Endothelial cell of umbilical vein (primary cell): ENCODE measurements at regions of chr5 and their contacts with region 1.

Region 1: DNA sequence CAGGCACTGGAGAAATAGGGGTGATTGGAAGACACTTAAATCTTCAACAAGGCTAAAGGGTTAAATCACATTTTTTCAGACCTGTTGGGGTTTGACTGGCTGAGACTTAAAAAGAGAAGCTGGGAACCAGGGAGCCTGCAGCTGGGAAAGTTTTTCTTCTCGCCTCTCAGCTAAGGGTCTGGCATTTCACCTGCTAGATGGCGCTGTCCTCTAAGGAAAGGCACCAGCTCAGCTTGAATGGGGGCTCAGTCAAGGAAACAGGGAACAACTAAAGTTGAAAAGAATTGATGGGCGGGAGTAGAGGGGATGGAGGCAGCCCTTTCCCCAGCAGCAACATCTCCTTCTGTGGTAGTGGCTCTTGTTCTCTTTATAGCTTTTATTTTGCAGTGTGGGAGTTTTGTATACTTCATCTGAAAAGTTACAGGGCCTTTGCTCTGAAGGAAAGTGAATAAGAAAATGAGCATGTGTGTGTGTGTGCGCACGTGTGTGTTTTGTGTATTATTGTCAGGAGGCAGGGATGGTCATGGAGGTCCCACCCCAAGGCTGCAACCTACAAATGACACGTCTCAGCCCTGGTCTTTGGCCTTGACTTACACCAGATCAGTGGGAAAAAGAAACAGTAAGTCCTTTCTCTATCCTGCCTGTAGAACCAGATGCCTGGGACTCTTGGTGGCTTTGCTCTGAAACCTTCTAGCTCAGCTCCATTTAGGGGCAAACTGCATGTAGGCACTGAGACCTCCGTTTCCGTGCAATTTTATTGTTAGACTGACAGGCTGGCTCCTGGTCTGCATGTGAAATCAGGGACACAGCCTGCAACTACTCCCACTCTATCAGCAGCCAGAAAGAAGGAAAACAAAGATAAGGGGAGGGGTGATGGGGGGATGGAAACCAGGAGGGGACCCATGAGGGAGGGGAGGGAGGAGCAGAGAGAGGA is 316.2 kb upstream of the CLINT1 start:
- DNase-seq: peak; percentile 72
- H3K4me3 ChIP-seq: no peak overlapping the region
- H3K27ac ChIP-seq: no peak overlapping the region
- H3K4me1 ChIP-seq: no peaks in the 10 kb centered on the region
- H3K27me3 ChIP-seq: peaks cover 0 to 2% of the 10 kb centered on the region in 2 experiments
- CTCF ChIP-seq: peak; percentile 69 to 80
- POLR2A ChIP-seq: no peak

Region 2: DNA sequence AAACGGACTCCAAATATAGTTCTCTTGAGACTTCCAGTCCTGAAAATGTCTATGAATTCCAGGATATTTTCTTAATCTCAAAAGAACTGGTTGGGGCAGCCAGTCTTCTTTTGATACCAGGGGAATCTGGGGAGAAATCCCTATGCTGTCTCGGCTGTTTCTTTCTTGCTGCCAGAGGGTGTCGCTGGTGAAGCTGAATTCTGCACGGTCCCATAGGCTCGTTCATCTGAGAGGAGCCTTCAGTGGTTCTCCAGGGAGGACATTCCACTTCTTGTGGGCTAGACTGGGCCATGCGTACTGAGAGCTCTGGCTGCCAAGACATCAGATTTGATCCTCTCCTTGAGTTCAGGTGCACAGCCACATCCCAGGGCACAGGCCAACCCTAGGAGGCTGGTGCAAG is 161.2 kb before region 1 on chr5:
- CTCF ChIA-PET with region 1: interaction called, 14 read pairs
- POLR2A ChIA-PET with region 1: no interaction called
- dilution Hi-C with region 1: no loop called
- intact Hi-C with region 1: loop called (anchors 1 kb)
- DNase-seq: peak; percentile 29
- H3K4me3 ChIP-seq: no peak overlapping the region
- H3K27ac ChIP-seq: no peak overlapping the region
- H3K4me1 ChIP-seq: no peaks in the 10 kb centered on the region
- H3K27me3 ChIP-seq: no peaks in the 10 kb centered on the region
- CTCF ChIP-seq: peak; percentile 17 to 26
- POLR2A ChIP-seq: no peak

Region 3: GRCh38 chr5:158390577-158390976 is 215.4 kb after region 1 on chr5:
- CTCF ChIA-PET with region 1: interaction called, 3 read pairs
- POLR2A ChIA-PET with region 1: no interaction called
- dilution Hi-C with region 1: no loop called
- intact Hi-C with region 1: loop called (anchors 1 kb)
- DNase-seq: peak; percentile 95
- H3K4me3 ChIP-seq: no peak overlapping the region
- H3K27ac ChIP-seq: peak overlapping the region; percentile 74
- H3K4me1 ChIP-seq: peaks cover 40% of the 10 kb centered on the region
- H3K27me3 ChIP-seq: no peaks in the 10 kb centered on the region
- CTCF ChIP-seq: no peak
- POLR2A ChIP-seq: peak; percentile 62

Region 4: DNA sequence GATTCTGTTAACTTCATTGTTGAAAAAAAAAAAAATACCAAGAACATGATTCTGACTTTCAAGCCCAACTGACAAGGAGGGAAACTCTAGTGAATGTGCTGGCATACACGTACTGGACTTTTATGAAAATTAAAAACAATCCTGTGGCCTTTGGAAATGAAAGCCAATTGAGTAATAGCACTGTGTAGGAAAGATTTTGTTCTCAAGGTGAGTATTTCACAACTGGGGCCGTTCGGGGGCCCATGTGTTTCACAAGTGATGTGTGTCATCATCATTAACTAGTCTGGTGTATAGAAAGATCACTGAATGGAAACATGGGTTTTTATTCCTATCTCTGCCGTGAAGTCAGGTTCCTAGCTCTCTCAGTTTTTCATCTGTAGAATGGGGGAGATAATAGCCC is 288.8 kb after region 1 on chr5:
- CTCF ChIA-PET with region 1: no interaction called
- POLR2A ChIA-PET with region 1: no interaction called
- dilution Hi-C with region 1: no loop called
- intact Hi-C with region 1: no loop called
- DNase-seq: no peak
- H3K4me3 ChIP-seq: no peak overlapping the region
- H3K27ac ChIP-seq: no peak overlapping the region
- H3K4me1 ChIP-seq: no peaks in the 10 kb centered on the region
- H3K27me3 ChIP-seq: no peaks in the 10 kb centered on the region
- CTCF ChIP-seq: no peak
- POLR2A ChIP-seq: no peak

Region 5: DNA sequence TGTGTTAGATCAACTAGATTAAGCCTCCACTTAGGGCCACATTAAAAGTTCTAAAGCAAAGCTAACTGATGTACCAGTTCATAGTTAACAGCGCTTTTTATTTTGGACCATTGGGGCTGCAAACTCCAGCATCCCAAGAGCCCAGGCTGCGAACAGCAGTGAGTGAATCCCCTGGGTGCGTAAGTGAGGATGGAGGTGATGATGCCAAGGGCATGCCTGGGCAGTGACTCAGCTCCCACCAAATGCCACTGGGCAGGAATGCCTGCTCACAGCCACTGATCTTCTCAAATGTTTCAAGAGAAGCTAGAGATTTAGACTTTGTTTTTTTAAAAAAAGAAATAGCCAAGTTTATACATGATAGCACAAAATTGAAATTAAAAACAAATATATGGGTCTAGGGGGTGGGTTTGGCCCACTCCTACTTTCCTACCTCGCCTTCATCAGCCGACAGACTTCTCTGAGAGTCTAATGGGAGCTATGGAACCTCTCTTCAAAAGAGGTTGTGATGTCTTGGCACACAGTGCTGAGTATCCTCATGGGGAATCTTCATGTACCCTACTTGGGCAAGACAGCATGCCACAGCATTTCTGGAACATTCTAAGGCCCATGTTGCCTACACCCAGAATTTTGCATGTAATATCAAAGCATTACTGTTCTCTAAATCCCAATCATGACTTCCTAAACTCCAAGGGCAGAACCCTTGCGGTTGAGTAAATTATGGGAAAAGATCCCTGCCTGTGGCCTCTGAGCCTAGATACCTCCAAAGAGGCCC is 526.4 kb after region 1 on chr5:
- CTCF ChIA-PET with region 1: interaction called, 107 read pairs
- POLR2A ChIA-PET with region 1: no interaction called
- dilution Hi-C with region 1: no loop called
- intact Hi-C with region 1: no loop called
- DNase-seq: no peak
- H3K4me3 ChIP-seq: no peak overlapping the region
- H3K27ac ChIP-seq: no peak overlapping the region
- H3K4me1 ChIP-seq: no peaks in the 10 kb centered on the region
- H3K27me3 ChIP-seq: no peaks in the 10 kb centered on the region
- CTCF ChIP-seq: no peak
- POLR2A ChIP-seq: no peak

Region 6: DNA sequence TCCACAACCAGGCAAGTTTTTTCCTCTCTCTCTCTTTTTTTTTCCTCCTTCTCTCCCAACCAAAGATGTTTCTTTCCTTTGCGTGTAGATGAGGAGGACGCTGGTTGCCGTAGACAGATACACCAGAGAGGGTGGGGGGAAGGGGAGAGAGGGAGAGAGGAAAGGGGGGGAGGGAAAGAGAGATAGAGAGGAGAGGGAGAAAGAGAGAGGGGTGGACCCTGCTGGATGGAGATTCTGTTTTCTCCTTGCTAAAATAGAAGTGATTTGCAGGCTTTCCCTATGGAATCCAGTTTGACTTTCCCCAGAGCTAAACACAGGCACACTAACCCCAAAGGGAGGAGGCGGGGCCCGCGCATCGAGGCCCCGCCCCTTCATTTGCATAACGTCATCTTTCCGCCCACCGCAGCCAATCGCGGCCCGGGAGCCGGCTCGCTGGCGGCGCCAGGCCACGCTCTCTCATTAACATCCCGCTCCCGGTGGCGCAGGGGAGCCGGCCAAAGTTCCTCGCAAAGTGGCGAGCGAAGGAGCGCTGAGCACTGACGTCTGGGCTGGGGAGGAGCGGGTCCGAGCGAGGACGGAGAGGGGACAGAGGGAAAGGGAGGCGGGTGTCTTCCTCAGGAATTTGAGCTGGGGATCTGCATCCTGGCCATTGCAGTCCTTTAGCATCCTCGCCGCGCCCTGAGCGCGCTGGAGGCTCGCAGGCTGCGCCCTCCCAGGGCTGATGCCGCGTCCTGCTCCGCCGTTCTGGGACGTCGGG is 925.0 kb after region 1 on chr5:
- CTCF ChIA-PET with region 1: interaction called, 266 read pairs
- POLR2A ChIA-PET with region 1: no interaction called
- dilution Hi-C with region 1: no loop called
- intact Hi-C with region 1: no loop called
- DNase-seq: peak; percentile 87
- H3K4me3 ChIP-seq: peak overlapping the region; percentile 26 to 67 (median 38)
- H3K27ac ChIP-seq: no peak overlapping the region
- H3K4me1 ChIP-seq: peaks cover 12% of the 10 kb centered on the region
- H3K27me3 ChIP-seq: peaks cover 65 to 70% of the 10 kb centered on the region in 2 experiments
- CTCF ChIP-seq: no peak
- POLR2A ChIP-seq: no peak